H1 (cell line): ENCODE measurements at regions of chr12 and their contacts with region 1.

Region 1: DNA sequence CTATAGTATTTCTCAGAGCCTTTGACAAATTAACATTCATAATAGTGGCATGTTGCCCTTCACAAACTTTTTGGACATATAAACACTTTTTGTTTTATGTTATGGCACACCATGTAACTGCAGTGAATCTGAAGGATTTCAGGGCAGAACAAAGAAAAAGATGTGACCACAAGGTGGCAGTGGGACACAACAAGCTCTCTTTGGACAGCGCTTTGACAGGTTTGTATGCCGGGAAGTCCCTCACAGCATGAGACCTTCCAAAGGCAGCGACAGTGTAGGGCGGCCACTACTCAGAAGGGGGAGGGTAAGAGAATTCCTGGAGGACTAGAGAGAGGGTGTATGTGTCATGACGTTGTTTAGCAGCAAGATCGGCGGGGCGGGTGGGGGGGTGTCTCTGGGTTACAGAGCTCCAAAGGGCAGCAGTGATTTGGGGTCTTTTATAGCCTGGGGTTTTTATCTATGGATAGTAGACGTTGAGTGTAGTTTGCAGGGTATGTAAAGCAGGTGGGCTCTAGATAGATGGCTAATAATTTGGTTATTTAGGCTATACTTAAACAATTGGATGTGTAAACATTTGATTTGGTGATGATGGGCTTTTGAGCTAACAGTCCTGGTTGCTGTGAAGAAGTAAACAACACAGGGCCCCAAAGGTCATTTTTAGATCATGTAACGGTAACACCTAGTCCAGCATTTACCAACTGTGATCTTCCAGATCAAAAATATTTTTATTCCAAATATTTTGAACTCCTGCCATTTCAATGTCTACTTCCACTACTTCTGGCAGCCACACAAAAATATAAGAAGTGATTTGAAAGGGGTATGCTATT is 22.9 kb downstream of the ETFBKMT start:
- DNase-seq: peak; percentile 69 to 78
- H3K4me3 ChIP-seq: no peak overlapping the region
- H3K27ac ChIP-seq: no peak overlapping the region
- H3K4me1 ChIP-seq: no peaks in the 10 kb centered on the region
- H3K27me3 ChIP-seq: no peaks in the 10 kb centered on the region
- CTCF ChIP-seq: peak; percentile 47 to 90 (median 78)
- EP300 ChIP-seq: no peak; a peak in 1 of 3 replicates
- POLR2A ChIP-seq: no peak
- RAD21 ChIP-seq: peak; percentile 100

Region 2: DNA sequence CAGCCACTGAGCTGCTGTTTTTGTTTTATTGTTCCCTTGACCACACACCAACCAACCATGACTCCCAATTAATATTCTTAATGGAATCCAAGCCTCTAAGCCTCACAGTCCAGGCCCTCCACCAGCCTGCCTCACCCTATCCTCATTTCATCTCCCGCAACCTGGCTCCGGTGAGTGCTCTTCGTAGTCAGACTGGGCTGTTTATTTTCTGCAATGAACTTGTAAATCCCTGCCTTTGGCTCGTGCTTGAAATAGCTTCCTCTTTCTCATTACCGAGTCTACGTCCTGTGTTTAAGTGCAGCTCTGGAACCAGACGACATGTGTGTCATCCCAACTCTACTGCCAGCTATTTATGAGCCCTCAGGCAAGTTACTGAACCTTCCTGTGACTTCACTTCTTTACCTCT is 35.3 kb before region 1 on chr12:
- CTCF ChIA-PET with region 1: interaction called, 14 read pairs
- POLR2A ChIA-PET with region 1: no interaction called
- DNase-seq: no peak
- H3K4me3 ChIP-seq: no peak overlapping the region
- H3K27ac ChIP-seq: no peak overlapping the region
- H3K4me1 ChIP-seq: no peaks in the 10 kb centered on the region
- H3K27me3 ChIP-seq: no peaks in the 10 kb centered on the region
- CTCF ChIP-seq: no peak
- EP300 ChIP-seq: no peak
- POLR2A ChIP-seq: no peak
- RAD21 ChIP-seq: no peak

Region 3: DNA sequence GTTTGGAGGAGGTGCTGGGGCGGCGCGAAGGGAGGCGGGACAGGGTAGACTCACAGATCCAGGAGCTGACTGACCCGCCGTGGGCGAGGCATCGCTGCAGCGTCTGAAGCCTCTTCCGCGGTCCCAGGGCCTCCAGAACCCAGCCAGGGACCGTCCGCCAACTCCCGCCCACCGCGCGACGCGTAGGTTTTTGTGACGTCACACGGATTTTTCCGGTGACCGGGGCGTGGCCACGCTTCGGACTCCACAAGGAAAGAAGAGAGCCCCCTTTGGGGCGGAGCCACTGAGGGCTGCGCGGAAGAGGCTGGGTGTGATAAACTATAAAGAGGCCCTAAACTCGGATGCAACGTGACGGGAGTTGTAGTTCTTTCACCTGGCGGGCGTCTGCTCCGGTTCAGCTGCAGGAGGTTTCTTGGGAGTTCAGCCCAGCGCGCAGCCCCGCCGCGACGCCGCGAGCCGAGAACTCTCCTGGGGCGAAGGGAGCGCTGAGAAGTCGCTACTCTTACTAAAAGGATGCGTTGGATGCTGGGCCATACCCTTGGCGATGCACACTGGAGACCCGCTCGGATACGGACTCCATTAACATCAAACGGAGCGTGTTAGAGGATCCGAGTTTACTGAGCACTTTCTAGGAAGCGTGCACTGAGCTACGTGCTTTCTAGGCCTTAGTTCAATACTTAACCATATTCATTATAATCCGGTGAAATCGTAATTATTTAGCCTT is 46.7 kb after region 1 on chr12 and contains the start of gene AMN1:
- CTCF ChIA-PET with region 1: interaction called, 11 read pairs
- POLR2A ChIA-PET with region 1: no interaction called
- DNase-seq: peak; percentile 98 to 100
- H3K4me3 ChIP-seq: peak within 1 kb of the TSS; percentile 73 to 77 (median 76)
- H3K27ac ChIP-seq: no peak within 1 kb of the TSS
- H3K4me1 ChIP-seq: peaks cover 2 to 12% (median 10%) of the 10 kb centered on the region in 4 experiments; a peak in 5 of 7 replicates
- H3K27me3 ChIP-seq: peaks cover 0 to 2% (median 0%) of the 10 kb centered on the region in 4 experiments; a peak in 2 of 7 replicates
- CTCF ChIP-seq: no peak
- EP300 ChIP-seq: no peak
- POLR2A ChIP-seq: peak; percentile 44 to 50; a peak in 2 of 3 replicates
- RAD21 ChIP-seq: peak in 1 of 2 experiments; percentile 10; a peak in 1 of 4 replicates
- total RNA-seq, gene AMN1: 7.1 and 7.5 TPM in 2 replicates

Region 4: DNA sequence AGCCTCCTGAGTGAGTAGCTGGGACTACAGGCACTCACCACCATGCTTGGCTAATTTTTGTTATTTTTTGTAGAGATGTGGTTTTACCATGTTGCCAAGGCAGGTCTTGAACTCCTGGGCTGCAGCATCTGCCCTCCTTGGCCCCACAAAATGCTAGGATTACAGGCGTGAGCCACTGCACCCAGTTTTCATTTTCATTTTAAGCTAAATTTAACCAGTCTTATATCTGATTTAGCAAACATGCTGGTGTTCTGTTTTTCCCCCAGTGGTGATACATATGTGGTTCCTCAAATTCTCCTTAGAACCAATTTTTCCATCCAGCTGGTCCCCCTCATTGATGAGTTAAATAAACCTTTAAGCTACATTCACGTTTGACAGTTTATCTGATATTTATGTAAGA is 380.5 kb after region 1 on chr12:
- CTCF ChIA-PET with region 1: interaction called, 10 read pairs
- POLR2A ChIA-PET with region 1: no interaction called
- DNase-seq: no peak
- H3K4me3 ChIP-seq: no peak overlapping the region
- H3K27ac ChIP-seq: no peak overlapping the region
- H3K4me1 ChIP-seq: no peaks in the 10 kb centered on the region; a peak in 1 of 7 replicates
- H3K27me3 ChIP-seq: 0 out of 7 replicates have a peak, but pooled peaks cover 0 to 2% (median 0%) of the 10 kb centered on the region in 4 experiments
- CTCF ChIP-seq: no peak
- EP300 ChIP-seq: no peak
- POLR2A ChIP-seq: no peak
- RAD21 ChIP-seq: no peak